ENCODE measurements at regions of chr16 and their contacts with region 1.

Region 1: DNA sequence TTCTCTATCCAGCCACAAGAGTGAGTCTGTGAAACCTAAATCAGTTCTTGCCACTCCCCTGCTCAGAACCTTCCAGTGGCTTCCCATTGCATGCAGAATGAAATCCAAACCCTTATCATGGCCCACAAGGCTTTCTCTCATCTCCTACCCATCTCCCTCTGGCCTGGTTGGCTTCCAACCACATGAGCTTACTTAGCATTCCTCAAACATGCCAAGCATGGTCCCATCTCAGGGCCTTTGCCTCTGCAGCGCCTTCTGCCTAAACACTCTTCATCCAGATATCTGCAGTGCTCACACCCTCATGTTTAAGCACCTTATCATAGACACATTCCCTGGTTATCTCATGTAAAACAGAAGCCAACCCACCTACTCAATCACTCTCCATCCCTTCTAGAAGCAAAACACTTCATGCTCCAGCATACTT is 15.5 kb downstream of the TK2 start:
- DNase-seq: no peak
- ATAC-seq: no peak
- H3K4me3 Mint-ChIP-seq: no peak overlapping the region
- H3K27ac Mint-ChIP-seq: peak overlapping the region in 1 of 10 donors; percentile 66
- H3K4me1 Mint-ChIP-seq: peaks cover 5 to 14% (median 7%) of the 10 kb centered on the region in 4 donors
- H3K27me3 Mint-ChIP-seq: no peaks in the 10 kb centered on the region

Region 2: DNA sequence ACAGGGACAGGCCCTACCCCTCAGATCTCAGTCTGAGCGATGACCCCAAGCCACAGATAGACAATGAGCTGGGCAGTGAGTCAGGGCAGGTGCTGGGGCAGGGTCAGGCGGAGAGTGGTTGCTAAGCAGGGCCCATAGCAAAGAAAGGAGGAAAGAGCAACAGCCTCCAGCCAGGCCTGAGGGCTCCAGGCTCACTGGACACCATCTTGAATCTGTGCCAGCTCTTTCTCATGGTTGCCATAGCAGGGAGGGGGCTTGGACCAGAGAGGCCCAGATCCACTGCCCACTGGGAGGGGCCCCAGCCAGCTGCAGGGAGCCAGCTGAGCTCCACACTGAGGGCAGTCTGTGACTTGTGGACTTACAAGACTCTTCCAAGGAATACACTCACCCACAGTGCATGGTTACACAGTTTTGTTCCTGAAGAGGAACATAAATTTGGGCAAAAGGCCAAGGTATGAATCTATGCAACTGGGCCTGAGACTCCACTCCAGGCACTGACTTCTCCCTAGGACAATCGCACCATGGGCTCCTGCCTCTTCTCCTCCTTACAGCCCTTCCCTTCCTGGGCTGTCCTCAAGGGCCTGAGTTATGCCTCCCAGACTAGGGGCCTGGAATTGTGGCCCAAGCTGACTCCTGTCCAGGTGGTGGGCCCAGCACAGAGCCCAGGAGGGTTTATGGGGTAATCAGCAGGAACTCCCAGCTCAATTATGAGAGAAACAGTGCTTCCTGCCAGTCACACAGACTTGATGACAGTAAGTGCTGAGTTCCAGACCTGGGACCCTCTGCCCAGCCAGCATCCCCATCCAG is 47.4 kb before region 1 on chr16:
- POLR2A ChIA-PET with region 1: interaction called, 11 read pairs
- DNase-seq: peak in 1 of 10 donors; percentile 14
- ATAC-seq: no peak
- H3K4me3 Mint-ChIP-seq: no peak overlapping the region
- H3K27ac Mint-ChIP-seq: peak overlapping the region in 1 of 10 donors; percentile 2
- H3K4me1 Mint-ChIP-seq: peaks cover 6 to 19% (median 11%) of the 10 kb centered on the region in 4 donors
- H3K27me3 Mint-ChIP-seq: peaks cover 0 to 1% (median 0%) of the 10 kb centered on the region in 5 donors

Region 3: GRCh38 chr16:66677179-66677578 is 142.8 kb after region 1 on chr16:
- POLR2A ChIA-PET with region 1: no interaction called
- DNase-seq: no peak
- ATAC-seq: no peak
- H3K4me3 Mint-ChIP-seq: no peak overlapping the region
- H3K27ac Mint-ChIP-seq: peak overlapping the region in 1 of 10 donors; percentile 22
- H3K4me1 Mint-ChIP-seq: peaks cover 0 to 2% (median 0%) of the 10 kb centered on the region in 4 donors
- H3K27me3 Mint-ChIP-seq: peaks cover 0 to 2% (median 0%) of the 10 kb centered on the region in 5 donors

Measured in naive thymus-derived CD8-positive, alpha-beta T cell (primary cell).